ENCODE measurements at regions of chr9 and their contacts with region 1.

Region 1: GRCh38 chr9:22238809-22239684 is 207.6 kb upstream of the DMRTA1 start:
- DNase-seq: no peak
- H3K4me3 ChIP-seq: no peak overlapping the region
- H3K27ac ChIP-seq: no peak overlapping the region
- H3K27me3 ChIP-seq: no peaks in the 10 kb centered on the region
- CTCF ChIP-seq: peak; percentile 66

Region 2: GRCh38 chr9:21985964-21986667 is 252.9 kb before region 1 on chr9:
- CTCF ChIA-PET with region 1: interaction called, 16 read pairs
- POLR2A ChIA-PET with region 1: no interaction called
- DNase-seq: no peak
- H3K4me3 ChIP-seq: no peak overlapping the region
- H3K27ac ChIP-seq: no peak overlapping the region
- H3K27me3 ChIP-seq: no peaks in the 10 kb centered on the region
- CTCF ChIP-seq: no peak

Region 3: GRCh38 chr9:22037954-22038690 is 200.9 kb before region 1 on chr9:
- CTCF ChIA-PET with region 1: interaction called, 26 read pairs
- POLR2A ChIA-PET with region 1: no interaction called
- DNase-seq: no peak
- H3K4me3 ChIP-seq: no peak overlapping the region
- H3K27ac ChIP-seq: no peak overlapping the region
- H3K27me3 ChIP-seq: no peaks in the 10 kb centered on the region
- CTCF ChIP-seq: peak; percentile 61

Region 4: DNA sequence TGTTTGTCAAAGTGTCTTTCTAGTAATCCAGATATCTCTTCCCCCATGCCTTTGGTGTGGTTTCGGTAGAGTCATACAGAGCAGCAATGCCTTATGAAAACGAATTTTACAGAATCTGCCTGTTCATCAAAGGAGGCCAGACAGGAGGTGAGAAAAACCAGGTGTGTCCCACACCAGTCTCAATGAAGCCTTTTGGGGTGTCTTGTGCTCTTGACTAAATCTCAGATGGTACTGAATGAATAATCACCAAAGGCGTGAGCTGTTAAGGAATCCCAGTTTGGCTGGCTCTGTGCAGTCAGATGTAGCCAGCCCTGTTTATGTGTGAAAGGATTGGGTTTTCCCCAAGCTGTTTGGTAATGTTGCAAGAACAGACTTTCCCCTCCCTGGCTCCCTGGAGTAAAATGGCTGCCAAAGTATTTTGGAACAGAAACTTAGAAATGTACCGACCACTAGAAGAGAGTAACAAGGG is 159.1 kb before region 1 on chr9:
- CTCF ChIA-PET with region 1: interaction called, 22 read pairs
- POLR2A ChIA-PET with region 1: no interaction called
- DNase-seq: peak; percentile 43
- H3K4me3 ChIP-seq: no peak overlapping the region
- H3K27ac ChIP-seq: peak overlapping the region; percentile 11
- H3K27me3 ChIP-seq: no peaks in the 10 kb centered on the region
- CTCF ChIP-seq: no peak

Region 5: DNA sequence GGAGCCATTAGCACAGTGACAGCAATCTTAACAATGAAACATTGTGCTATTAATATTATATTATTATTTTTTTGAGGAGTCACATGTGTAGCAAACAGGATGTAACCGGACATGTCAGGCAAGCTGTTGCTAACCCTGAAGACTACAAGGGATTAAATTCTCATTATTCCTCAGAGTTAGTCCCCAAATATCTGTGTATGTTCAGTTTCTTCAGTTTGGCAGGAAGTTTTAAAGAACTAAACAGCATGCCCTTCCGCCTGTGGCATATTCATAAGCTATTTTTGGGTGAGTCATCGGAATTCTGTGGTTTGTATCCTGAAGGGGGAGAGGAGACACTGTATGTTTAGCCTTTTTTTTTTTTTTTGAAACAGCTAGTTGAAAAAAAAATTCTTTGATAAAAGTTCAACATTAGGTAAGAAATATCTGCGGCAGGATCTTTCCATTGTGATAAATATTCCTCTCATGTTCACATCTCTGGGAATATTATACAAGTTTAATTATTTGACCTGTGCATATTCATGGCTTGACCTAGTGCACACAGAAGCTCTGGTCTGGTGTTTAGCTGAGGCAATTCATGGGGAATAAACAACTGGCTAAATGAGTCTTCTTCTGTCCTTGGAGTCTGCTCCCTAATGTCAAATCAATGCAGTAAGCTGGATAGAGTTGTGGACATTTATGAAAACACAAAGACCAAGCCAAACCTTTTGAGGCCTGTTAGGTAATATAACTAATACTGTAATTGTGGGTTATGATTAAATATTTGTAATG is 27.3 kb before region 1 on chr9:
- CTCF ChIA-PET with region 1: interaction called, 13 read pairs
- POLR2A ChIA-PET with region 1: interaction called, 5 read pairs
- DNase-seq: peak; percentile 69
- H3K4me3 ChIP-seq: no peak overlapping the region
- H3K27ac ChIP-seq: no peak overlapping the region
- H3K27me3 ChIP-seq: no peaks in the 10 kb centered on the region
- CTCF ChIP-seq: no peak

Measured in AG04450 (cell line).